Dorsolateral prefrontal cortex (tissue), 120 donors: ENCODE measurements at regions of chr14 and their contacts with region 1.

Region 1: DNA sequence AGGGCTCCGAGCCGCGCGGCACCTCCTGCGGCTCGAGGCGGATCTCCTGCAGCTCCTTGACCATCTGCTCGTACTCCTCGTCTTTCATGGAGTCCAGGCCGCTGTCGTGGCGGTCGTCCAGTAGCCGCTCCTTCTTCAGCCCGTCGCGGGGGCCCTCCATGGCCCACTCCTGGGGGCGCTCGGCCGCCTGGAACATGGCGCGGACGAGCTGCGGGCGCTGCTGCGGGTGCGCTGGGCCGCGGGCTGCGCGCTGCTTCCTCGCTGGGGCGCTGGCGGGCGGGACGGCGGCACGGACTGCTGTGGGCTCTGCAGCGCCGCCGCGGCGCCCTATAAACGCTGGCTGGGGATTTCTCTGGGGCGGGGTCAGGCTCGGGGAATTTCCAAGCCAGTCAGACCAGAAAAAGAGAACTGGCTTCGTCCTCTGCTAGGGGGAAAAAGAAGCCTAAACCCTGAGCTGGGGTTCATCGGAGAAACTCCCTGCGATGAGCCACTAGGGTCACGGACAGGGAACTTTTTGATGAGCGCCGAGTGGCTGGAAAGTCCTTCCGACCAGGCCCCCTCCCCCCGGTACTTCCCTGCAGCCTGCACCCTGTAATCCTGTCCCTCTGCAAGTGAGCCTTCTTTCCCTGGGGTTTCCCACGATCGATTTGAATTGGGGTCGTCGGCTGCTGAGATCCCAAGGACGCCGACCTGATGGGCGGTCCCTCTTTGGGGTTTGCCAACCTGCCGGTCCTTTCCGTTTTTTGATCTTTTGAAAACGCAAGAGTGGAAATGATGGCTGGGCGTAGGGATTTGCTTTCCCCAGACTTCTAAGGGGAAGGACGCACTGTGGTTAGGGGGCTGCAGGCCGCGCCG is at the start of gene NFKBIA:
- DNase-seq: peak; percentile 83 to 95 (median 88)
- H3K4me3 ChIP-seq: peak within 1 kb of the TSS; percentile 58 to 94 (median 82)
- H3K27ac ChIP-seq: peak within 1 kb of the TSS; percentile 94 to 100 (median 99)
- H3K27me3 ChIP-seq: no peaks in the 10 kb centered on the region
- CTCF ChIP-seq: peak in 50 of 56 donors; percentile 16 to 72 (median 44)
- total RNA-seq, gene NFKBIA: 38.8 to 167 (median 81.3) TPM

Region 2: GRCh38 chr14:34912178-34912577 is 492.5 kb before region 1 on chr14:
- intact Hi-C with region 1: no loop called
- DNase-seq: no peak
- H3K4me3 ChIP-seq: no peak overlapping the region
- H3K27ac ChIP-seq: no peak overlapping the region
- H3K27me3 ChIP-seq: no peaks in the 10 kb centered on the region
- CTCF ChIP-seq: no peak

Region 3: DNA sequence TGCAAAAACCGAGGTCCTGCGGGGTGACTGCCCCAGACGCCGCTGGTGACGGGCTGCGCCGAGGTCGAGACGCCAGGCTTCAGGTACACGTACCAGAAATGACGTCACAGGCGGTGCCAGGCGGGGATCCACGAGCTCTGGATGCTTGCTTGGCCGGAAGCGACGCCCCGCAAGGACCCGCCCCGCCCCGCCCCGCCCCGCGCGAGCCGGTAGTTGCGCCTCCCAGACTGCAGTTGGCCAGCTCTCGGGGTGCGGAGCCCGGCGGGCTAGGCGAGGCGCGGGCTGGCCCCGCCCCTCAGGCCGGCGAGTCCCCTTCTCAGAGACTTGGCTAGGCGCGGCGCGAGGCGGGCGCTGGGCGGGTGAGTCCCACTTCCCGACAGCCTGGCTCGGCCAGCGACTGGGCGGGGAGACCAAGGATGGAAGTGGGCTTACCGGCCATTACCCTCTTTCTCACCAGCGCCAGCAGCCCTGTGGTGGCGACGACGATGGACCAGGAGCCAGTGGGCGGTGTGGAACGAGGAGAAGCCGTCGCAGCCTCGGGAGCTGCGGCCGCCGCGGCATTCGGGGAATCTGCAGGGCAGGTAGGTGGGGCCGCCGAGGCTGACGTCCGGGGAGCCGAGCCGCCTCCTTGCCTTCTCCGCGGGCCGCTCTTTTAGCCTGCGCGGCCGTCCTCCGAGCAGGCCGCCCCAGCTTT is 358.5 kb before region 1 on chr14 and contains the start of gene FAM177A1:
- intact Hi-C with region 1: loop called in 1 of 2 experiments (anchors 2 kb)
- DNase-seq: peak; percentile 97 to 99 (median 98)
- H3K4me3 ChIP-seq: peak within 1 kb of the TSS; percentile 60 to 97 (median 91)
- H3K27ac ChIP-seq: peak within 1 kb of the TSS; percentile 92 to 100 (median 98)
- H3K27me3 ChIP-seq: no peaks in the 10 kb centered on the region
- CTCF ChIP-seq: peak in 24 of 56 donors; percentile 11 to 45 (median 30)
- total RNA-seq, gene FAM177A1: 34.2 to 106 (median 58.8) TPM

Region 4: GRCh38 chr14:35215110-35215876 is 189.4 kb before region 1 on chr14:
- intact Hi-C with region 1: loop called in 1 of 2 experiments (anchors 5 kb)
- DNase-seq: no peak
- H3K4me3 ChIP-seq: no peak overlapping the region
- H3K27ac ChIP-seq: no peak overlapping the region
- H3K27me3 ChIP-seq: no peaks in the 10 kb centered on the region
- CTCF ChIP-seq: peak in 53 of 56 donors; percentile 21 to 72 (median 50)

Region 5: DNA sequence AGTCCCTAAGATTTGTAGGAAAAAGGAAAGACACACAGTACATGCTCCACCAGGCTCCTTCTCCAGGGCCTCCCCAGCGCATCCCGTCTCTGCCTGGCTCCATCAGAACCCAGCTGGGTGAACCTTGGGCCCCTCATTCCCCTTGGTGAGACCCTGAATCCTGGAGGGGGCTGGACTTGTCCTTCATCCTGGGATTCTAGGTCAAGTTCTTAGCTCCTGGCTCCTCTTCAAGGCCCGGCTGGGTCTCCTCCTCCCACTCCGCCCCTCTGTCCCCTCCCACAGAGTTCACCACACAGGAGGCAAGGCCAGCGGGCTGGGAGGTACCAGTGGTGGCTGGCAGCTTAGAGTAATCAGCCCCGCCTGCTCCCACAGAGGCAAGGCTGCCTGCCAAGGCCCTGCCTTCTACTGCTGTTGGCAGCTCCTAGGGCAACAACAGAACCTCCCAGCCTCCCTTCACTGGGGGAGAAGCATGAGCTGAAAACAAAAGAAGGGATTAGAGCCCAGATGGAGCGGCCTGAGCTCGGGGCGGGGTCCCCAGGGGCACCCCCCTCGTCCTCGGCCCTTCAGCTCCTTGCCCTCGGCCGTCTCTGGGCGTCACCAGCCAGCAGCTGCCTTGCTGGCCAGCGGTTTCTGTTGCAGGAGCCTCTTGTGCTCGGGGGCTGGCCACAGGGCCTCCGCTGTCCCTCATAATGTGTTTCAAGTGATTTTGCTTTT is 63.1 kb before region 1 on chr14:
- intact Hi-C with region 1: loop called (anchors 1 kb)
- DNase-seq: peak; percentile 49 to 99 (median 95)
- H3K4me3 ChIP-seq: peak overlapping the region in 56 of 59 donors; percentile 0 to 60 (median 38)
- H3K27ac ChIP-seq: peak overlapping the region; percentile 70 to 98 (median 95)
- H3K27me3 ChIP-seq: no peaks in the 10 kb centered on the region
- CTCF ChIP-seq: peak in 13 of 56 donors; percentile 4 to 46 (median 20)

Region 6: GRCh38 chr14:35653045-35653444 is 248.4 kb after region 1 on chr14:
- intact Hi-C with region 1: no loop called
- DNase-seq: no peak
- H3K4me3 ChIP-seq: no peak overlapping the region
- H3K27ac ChIP-seq: no peak overlapping the region
- H3K27me3 ChIP-seq: no peaks in the 10 kb centered on the region
- CTCF ChIP-seq: no peak

Region 7: DNA sequence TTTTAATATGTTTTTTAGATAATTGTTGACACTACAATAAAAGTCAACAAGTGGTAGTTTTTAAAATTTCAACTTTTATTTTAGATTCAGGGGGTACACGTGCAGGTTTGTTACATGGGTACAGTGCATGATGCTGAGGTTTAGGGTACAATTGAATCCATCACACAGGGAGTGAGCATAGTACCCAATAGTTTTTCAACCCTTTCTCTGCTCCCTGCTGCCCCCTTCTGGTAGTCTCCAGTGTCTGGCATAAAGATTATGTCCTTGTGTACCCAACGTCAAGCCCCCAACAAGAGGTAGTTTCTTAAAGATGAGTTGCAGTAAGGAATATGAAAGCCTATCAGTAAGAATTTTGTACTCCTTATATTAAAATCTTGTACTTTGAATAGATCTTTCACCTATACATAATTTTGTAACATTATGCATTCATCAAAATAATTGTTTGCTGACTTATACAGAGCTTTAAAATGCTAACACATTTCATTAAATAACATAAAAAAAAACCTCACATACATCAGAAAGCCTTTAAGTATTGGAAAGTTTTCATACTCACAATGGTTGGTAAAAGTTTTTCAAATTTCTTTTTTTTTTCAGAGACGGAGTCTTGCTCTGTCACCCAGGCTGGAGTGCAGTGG is 409.8 kb after region 1 on chr14:
- intact Hi-C with region 1: loop called in 1 of 2 experiments (anchors 10 kb)
- DNase-seq: peak in 4 of 10 donors; percentile 11 to 53 (median 38)
- H3K4me3 ChIP-seq: no peak overlapping the region
- H3K27ac ChIP-seq: no peak overlapping the region
- H3K27me3 ChIP-seq: no peaks in the 10 kb centered on the region
- CTCF ChIP-seq: peak; percentile 46 to 81 (median 68)